OCI-LY7 (cell line): ENCODE measurements at regions of chr1 and their contacts with region 1.

Region 1: GRCh38 chr1:205121660-205122488 is at the start of gene RBBP5:
- DNase-seq: peak; percentile 99
- H3K4me3 ChIP-seq: peak within 1 kb of the TSS; percentile 91
- H3K27ac ChIP-seq: peak within 1 kb of the TSS; percentile 70
- H3K4me1 ChIP-seq: peaks cover 31% of the 10 kb centered on the region
- CTCF ChIP-seq: peak; percentile 83
- total RNA-seq, gene RBBP5: 11.9 and 14.7 TPM in 2 replicates

Region 2: DNA sequence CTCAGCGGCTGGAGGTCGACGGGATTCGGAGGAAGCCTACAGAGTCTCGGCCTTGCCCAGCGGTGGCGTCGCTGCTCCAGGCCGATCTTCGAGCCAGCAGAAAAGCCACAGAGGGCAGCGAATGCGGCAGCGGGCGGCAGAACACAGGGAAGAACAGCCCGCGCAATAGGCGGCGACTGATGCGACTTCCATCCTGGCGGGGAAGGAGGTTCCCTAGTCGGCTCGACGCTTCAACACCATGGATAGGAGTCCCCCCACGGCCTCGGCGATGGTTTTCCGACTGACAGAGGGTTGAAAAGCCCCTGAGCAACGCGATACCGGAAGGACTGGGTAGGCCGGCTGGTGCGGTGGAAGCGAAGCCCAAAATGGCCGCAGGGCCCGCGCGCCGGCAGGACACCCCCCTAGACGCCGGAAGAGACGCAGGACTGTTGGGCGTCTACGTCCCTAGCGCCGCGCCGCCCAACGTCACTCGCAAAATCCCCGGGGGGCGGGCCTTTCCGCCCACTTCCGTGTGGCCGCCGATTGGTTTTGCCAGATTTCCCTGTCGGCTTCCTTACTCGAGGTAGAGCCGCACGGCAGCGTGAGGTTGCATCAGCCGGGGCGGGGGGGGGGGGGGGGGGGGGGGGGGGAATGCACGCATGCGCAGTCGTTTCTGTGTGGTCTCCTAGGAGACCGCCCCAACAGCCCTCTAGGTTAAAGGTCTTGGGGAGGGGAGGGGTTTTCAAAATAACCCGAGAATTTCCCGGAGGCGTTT is 710.2 kb before region 1 on chr1 and contains the start of gene PPP1R15B:
- CTCF ChIA-PET with region 1: no interaction called
- POLR2A ChIA-PET with region 1: no interaction called
- intact Hi-C with region 1: loop called (anchors 10 kb)
- DNase-seq: peak; percentile 99
- H3K4me3 ChIP-seq: peak within 1 kb of the TSS; percentile 98
- H3K27ac ChIP-seq: peak within 1 kb of the TSS; percentile 79
- H3K4me1 ChIP-seq: peaks cover 19% of the 10 kb centered on the region
- CTCF ChIP-seq: no peak
- total RNA-seq, gene PPP1R15B: 63.5 and 72.6 TPM in 2 replicates

Region 3: GRCh38 chr1:205091043-205091740 is 30.7 kb before region 1 on chr1:
- CTCF ChIA-PET with region 1: no interaction called
- POLR2A ChIA-PET with region 1: no interaction called
- intact Hi-C with region 1: no loop called
- DNase-seq: no peak
- H3K4me3 ChIP-seq: no peak overlapping the region
- H3K27ac ChIP-seq: no peak overlapping the region
- H3K4me1 ChIP-seq: no peaks in the 10 kb centered on the region
- CTCF ChIP-seq: no peak

Region 4: GRCh38 chr1:205111354-205111753 is 10.5 kb before region 1 on chr1:
- CTCF ChIA-PET with region 1: no interaction called
- POLR2A ChIA-PET with region 1: interaction called, 22 read pairs
- intact Hi-C with region 1: no loop called
- DNase-seq: no peak
- H3K4me3 ChIP-seq: no peak overlapping the region
- H3K27ac ChIP-seq: no peak overlapping the region
- H3K4me1 ChIP-seq: no peaks in the 10 kb centered on the region
- CTCF ChIP-seq: no peak

Region 5: GRCh38 chr1:205141236-205142101 is 19.6 kb after region 1 on chr1:
- CTCF ChIA-PET with region 1: interaction called, 3 read pairs
- POLR2A ChIA-PET with region 1: interaction called, 5 read pairs
- intact Hi-C with region 1: loop called (anchors 2 kb)
- DNase-seq: peak; percentile 85
- H3K4me3 ChIP-seq: no peak overlapping the region
- H3K27ac ChIP-seq: no peak overlapping the region
- H3K4me1 ChIP-seq: peaks cover 4% of the 10 kb centered on the region
- CTCF ChIP-seq: peak; percentile 94

Region 6: DNA sequence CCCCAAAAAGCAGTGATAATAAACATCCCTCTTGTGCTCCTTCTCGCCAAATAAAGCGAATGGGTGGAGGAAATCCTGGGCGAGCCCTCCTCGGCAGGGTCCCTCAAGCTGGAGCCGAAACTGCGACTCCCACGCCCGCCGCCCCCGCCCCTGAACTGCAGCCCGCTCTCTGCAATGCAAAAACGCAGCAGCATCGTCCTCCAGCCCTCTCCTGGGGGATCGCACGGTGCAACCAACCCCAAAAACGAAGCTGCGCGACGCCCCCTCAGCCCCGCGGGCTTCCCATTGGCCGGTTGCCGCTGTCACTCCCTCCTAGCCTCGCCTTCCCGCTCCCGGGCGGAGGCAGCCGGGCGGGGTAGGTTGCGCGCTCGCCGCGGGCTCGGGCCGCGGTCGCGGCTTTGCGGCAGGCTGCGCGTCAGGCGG is 105.7 kb after region 1 on chr1 and contains the start of gene TMCC2:
- CTCF ChIA-PET with region 1: no interaction called
- POLR2A ChIA-PET with region 1: interaction called, 4 read pairs
- intact Hi-C with region 1: loop called (anchors 5 kb)
- DNase-seq: peak; percentile 94
- H3K4me3 ChIP-seq: peak within 1 kb of the TSS; percentile 77
- H3K27ac ChIP-seq: peak within 1 kb of the TSS; percentile 17
- H3K4me1 ChIP-seq: peaks cover 28% of the 10 kb centered on the region
- CTCF ChIP-seq: no peak
- total RNA-seq, gene TMCC2: 7.0 and 7.8 TPM in 2 replicates

Region 7: GRCh38 chr1:205321164-205321958 is 199.5 kb after region 1 on chr1 and contains the start of gene NUAK2:
- CTCF ChIA-PET with region 1: no interaction called
- POLR2A ChIA-PET with region 1: no interaction called
- intact Hi-C with region 1: loop called (anchors 5 kb)
- DNase-seq: peak; percentile 87
- H3K4me3 ChIP-seq: peak within 1 kb of the TSS; percentile 75
- H3K27ac ChIP-seq: peak within 1 kb of the TSS; percentile 16
- H3K4me1 ChIP-seq: peaks cover 61% of the 10 kb centered on the region
- CTCF ChIP-seq: peak; percentile 61
- total RNA-seq, gene NUAK2: 6.5 and 9.1 TPM in 2 replicates